Cardiac septum (tissue), 1 donor: ENCODE measurements at regions of chr2 and their contacts with region 1.

Region 1: DNA sequence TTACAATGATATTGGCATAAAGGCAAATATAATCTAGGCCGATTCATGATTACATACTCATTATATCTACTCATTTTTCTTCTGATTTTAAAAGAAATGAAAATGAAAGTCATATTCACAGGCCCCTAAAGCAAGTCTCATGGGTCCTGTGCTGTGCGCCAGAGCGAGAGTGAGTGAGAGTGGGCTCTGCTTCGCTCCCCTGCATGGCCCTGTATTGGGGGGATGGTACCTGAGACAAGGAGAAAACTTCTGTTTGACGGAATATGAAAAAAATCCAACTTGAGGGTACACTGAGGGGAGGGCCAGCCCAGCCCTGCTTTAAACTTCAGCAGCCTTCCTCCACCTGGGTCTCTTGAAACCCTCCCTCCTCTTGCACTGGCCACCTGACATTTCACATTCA is 81.4 kb upstream of the RGPD5 start:
- DNase-seq: peak; percentile 47

Region 2: GRCh38 chr2:109545828-109546713 is 166.7 kb before region 1 on chr2:
- intact Hi-C with region 1: loop called (anchors 1 kb)
- DNase-seq: peak; percentile 78